ENCODE measurements at regions of chr17 and their contacts with region 1.

Region 1: GRCh38 chr17:71237903-71238538 is 882.8 kb upstream of the SOX9 start:
- DNase-seq: no peak
- H3K4me3 ChIP-seq: no peak overlapping the region
- H3K27ac ChIP-seq: no peak overlapping the region
- H3K4me1 ChIP-seq: no peaks in the 10 kb centered on the region
- H3K27me3 ChIP-seq: no peaks in the 10 kb centered on the region
- CTCF ChIP-seq: peak in 3 of 6 experiments; percentile 17 to 37 (median 26)
- POLR2A ChIP-seq: no peak

Region 2: DNA sequence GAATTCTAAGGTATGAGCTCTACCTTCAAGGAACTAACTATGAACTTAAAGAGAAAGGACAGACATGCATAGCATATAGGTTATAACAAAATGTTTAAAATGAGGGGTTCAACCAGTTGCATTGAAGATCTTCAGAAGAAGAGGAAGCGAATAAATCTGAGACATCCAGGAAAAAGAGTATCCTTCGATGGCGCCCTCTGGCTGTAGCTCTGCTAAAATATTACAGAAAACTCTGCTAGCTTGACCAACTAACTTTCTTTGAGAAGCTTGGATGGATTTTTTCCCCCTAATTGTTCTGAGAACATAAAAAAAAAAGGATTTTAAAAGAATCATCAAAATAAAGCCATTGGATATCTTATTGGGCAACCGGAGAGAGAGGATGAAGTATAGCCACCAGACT is 222.9 kb after region 1 on chr17:
- intact Hi-C with region 1: loop called (anchors 5 kb)
- DNase-seq: peak; percentile 49 to 58
- H3K4me3 ChIP-seq: no peak overlapping the region
- H3K27ac ChIP-seq: no peak overlapping the region
- H3K4me1 ChIP-seq: no peaks in the 10 kb centered on the region
- H3K27me3 ChIP-seq: peaks cover 3% of the 10 kb centered on the region
- CTCF ChIP-seq: peak in 4 of 6 experiments; percentile 26 to 53 (median 51)
- POLR2A ChIP-seq: no peak

Measured in thyroid gland (tissue), 4 donors.